ENCODE measurements at regions of chr1 and their contacts with region 1.

Region 1: DNA sequence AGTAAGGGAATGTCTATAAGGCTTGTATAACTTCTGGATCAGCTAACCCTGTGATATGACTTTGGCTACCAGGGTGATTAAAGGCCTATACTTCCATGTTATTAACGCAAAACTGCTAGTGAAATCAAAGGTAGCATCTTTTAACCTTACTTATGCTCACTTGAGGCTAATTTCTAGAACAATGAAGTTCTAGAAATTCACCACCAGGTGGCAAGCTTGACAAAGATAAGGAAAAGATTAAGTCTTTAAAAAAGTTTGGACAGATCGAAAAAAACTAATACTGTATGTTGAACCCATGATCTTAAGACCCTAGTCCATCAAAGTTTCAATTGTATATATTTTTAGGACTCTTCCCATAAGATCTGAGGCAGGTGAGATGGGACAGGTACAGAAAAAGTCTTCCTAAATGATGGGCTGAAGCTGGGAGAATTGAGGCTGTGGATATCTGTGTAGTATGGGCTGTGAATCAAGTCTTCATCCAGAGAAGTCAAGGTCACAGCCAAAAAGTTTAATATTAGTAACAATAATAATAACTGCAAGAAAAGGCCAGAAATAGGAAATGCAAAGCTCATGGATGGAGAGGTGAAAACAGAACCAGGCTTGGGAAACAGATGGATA is 18.8 kb downstream of the KYAT3 start:
- DNase-seq: no peak
- H3K4me3 ChIP-seq: no peak overlapping the region
- H3K27me3 ChIP-seq: no peaks in the 10 kb centered on the region
- CTCF ChIP-seq: peak; percentile 59

Region 2: DNA sequence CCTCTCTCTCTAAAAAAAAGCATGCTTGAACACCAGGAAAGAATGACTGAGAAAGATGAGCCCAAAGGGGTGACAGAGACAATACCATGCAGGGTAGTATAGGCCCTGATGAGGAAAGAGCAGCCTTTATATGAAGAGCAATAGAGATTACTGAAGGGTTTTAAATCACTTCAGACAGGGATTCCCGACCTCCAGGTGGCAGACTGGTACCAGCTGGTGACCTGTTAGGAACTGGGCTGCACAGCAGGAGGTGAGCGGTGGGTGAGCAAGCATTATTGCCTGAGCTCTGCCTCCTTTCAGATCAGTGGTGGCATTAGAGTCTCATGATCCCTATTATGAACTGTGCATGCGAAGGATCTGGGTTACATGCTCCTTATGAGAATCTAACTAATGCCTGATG is 51.4 kb before region 1 on chr1:
- CTCF ChIA-PET with region 1: no interaction called
- POLR2A ChIA-PET with region 1: no interaction called
- DNase-seq: no peak
- H3K4me3 ChIP-seq: no peak overlapping the region
- H3K27me3 ChIP-seq: no peaks in the 10 kb centered on the region
- CTCF ChIP-seq: no peak

Region 3: DNA sequence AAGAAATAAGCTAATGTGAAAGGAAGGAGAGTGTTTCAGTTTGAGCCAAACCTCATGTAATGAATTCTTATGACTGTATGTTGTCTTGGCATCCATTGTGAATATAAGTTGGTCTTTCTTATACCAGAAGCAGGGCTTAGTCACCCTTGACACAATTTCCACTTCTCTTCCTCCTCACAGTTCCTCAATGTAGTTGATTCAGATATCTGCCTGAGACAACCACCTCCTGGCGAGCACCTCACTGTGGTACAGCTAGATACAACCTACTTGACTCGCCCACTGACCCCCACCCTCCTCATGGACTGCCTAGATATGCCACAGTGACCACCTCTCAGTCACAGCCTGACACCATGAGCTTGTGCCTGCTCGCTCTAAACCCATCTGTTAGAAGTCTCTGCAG is 26.8 kb before region 1 on chr1:
- CTCF ChIA-PET with region 1: interaction called, 11 read pairs
- POLR2A ChIA-PET with region 1: no interaction called
- DNase-seq: no peak
- H3K4me3 ChIP-seq: no peak overlapping the region
- H3K27me3 ChIP-seq: no peaks in the 10 kb centered on the region
- CTCF ChIP-seq: no peak

Region 4: GRCh38 chr1:88961647-88962275 is 11.9 kb before region 1 on chr1:
- CTCF ChIA-PET with region 1: interaction called, 12 read pairs
- POLR2A ChIA-PET with region 1: no interaction called
- DNase-seq: no peak
- H3K4me3 ChIP-seq: no peak overlapping the region
- H3K27me3 ChIP-seq: no peaks in the 10 kb centered on the region
- CTCF ChIP-seq: no peak

Region 5: GRCh38 chr1:88983791-88984559 is 10.3 kb after region 1 on chr1:
- CTCF ChIA-PET with region 1: interaction called, 35 read pairs
- POLR2A ChIA-PET with region 1: no interaction called
- DNase-seq: no peak
- H3K4me3 ChIP-seq: no peak overlapping the region
- H3K27me3 ChIP-seq: no peaks in the 10 kb centered on the region
- CTCF ChIP-seq: peak; percentile 66

Region 6: DNA sequence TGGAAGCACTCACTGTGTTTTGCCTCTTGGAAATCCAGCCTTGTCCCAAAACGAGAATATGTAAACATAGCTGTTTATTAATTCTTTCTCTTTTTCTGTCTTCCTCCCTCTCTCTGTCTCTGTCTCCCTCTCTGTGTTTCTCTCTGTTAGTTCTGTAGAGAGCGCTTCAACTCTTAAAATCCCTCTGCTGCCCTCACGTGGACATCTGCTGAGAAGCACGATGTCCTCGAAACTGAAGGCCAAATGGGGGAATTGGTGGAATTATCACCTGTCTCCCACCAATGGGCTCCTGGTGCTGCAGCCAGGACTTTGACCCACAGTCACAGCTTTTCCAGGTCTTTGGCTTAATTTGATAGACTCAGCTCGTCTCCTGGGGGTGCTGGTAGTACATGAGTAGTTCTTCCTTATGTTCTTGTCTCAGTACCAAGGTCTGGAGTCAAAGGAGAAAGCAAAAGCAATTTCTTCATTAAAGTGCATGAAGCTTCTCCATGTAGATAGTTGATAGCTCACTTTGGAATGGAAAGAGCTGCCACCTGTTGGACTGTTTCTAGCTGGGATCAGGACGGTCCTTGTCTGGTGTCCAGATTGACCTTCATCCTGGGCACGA is 384.8 kb after region 1 on chr1:
- CTCF ChIA-PET with region 1: interaction called, 10 read pairs
- POLR2A ChIA-PET with region 1: no interaction called
- DNase-seq: peak; percentile 5
- H3K4me3 ChIP-seq: no peak overlapping the region
- H3K27me3 ChIP-seq: no peaks in the 10 kb centered on the region
- CTCF ChIP-seq: peak; percentile 81

Region 7: GRCh38 chr1:89454845-89455521 is 481.4 kb after region 1 on chr1:
- CTCF ChIA-PET with region 1: interaction called, 16 read pairs
- POLR2A ChIA-PET with region 1: no interaction called
- DNase-seq: no peak
- H3K4me3 ChIP-seq: no peak overlapping the region
- H3K27me3 ChIP-seq: no peaks in the 10 kb centered on the region
- CTCF ChIP-seq: peak; percentile 63